ENCODE measurements at regions of chr14 and their contacts with region 1.

Region 1: DNA sequence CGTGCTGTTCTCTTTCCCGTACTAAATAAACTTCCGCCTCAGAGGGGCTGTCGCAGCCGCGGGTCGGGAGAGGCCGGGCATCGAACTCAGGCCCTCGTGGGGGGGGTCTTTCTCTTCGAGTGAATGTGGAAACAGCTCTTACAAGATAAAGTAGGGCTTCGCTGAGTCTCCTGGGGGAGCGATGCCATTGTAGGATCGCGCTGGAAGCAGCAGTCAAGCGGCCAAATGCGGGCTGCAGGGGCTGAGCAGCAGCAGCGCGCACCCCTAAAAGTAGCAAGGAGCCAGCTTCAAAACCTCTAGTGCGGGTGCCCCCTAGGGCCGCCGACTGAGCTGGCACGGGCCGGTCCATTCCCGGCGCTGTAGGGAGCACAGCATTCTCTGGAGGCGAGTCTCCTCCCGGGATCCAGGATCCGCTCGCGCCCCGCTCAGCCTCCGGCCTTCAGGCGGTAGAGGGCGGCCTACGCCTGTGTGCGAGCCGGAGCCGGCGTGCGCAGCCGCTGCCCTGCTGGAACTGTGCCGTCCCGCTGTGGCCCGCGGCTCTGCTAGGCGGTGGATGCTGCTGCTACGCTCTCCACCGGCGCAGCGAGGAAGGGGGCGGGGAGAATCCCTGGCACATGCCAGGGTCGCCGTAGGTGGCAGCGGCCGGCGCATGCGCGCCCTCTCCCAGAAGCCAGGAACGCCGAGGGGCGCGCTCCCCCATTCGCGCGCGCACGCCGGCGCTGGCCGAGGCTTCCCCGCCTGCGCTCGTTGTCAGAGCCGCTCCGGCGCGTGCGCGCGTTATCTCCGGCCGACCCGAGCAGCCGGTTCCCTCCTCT is at the start of gene FUT8:
- DNase-seq: peak; percentile 84 to 96
- ATAC-seq: peak; percentile 85 to 91
- H3K4me3 ChIP-seq: peak within 1 kb of the TSS; percentile 86
- H3K27ac ChIP-seq: peak within 1 kb of the TSS; percentile 88 to 98
- H3K4me1 ChIP-seq: peaks cover 14% of the 10 kb centered on the region; the same call in 2 of the 3 replicates
- CTCF ChIP-seq: peak; percentile 56
- EP300 ChIP-seq: no peak
- POLR2A ChIP-seq: peak; percentile 96
- RAD21 ChIP-seq: peak; percentile 35 to 76; a peak in 4 of 5 replicates
- polyA plus RNA-seq, gene FUT8: 20.3 and 27.5 TPM in 2 replicates

Region 2: GRCh38 chr14:64937821-64938193 is 474.4 kb before region 1 on chr14:
- CTCF ChIA-PET with region 1: no interaction called
- POLR2A ChIA-PET with region 1: no interaction called
- DNase-seq: peak; percentile 29 to 48
- ATAC-seq: peak; percentile 53 to 65
- H3K4me3 ChIP-seq: no peak overlapping the region
- H3K27ac ChIP-seq: peak overlapping the region; percentile 51 to 77
- H3K4me1 ChIP-seq: peaks cover 68% of the 10 kb centered on the region
- CTCF ChIP-seq: peak; percentile 49
- EP300 ChIP-seq: no peak
- POLR2A ChIP-seq: no peak
- RAD21 ChIP-seq: peak; percentile 44 to 57; a peak in 4 of 5 replicates

Region 3: GRCh38 chr14:65164068-65164824 is 248.0 kb before region 1 on chr14:
- CTCF ChIA-PET with region 1: interaction called, 137 read pairs
- POLR2A ChIA-PET with region 1: interaction called, 21 read pairs
- DNase-seq: peak; percentile 56 to 64
- ATAC-seq: peak; percentile 75 to 83
- H3K4me3 ChIP-seq: no peak overlapping the region
- H3K27ac ChIP-seq: no peak overlapping the region
- H3K4me1 ChIP-seq: no peaks in the 10 kb centered on the region
- CTCF ChIP-seq: peak; percentile 94
- EP300 ChIP-seq: no peak
- POLR2A ChIP-seq: no peak
- RAD21 ChIP-seq: peak; percentile 96

Region 4: DNA sequence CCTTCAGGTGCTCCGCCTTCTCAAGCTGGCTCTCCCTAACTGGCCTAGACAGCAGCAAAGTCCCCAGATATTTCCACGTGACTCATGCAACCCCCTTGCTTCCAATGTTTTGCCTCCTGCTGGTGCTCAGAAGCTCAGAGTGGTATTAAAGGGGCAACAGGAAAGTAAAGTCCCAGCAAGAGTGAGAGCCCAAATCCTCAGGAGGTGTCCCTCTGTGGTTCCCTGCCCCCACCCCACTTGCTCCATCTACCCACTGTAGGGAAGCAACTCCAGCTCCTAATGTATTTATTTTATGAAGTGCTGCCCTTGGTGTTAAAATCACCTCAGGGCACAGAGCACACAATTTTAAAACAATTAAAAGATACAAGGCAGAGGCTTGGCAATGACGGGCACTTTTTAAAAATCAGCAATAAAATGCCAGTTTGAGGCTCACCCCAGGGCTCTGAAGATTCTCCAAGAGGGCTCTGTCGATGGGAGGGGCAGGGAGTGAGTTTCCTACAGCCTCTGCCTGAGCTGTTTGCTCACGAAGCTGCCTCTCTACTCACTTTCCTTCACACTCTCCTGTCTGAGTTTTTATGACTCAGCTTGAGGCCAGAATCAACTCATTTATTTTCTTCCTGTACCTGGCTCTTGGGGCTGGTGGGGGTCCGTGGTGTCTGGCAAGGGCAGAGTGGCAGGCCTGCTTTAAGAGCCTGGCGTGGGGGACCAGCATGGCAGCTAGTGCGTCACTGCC is 228.0 kb before region 1 on chr14:
- CTCF ChIA-PET with region 1: interaction called, 12 read pairs
- POLR2A ChIA-PET with region 1: interaction called, 5 read pairs
- DNase-seq: peak in 1 of 2 experiments; percentile 23
- ATAC-seq: peak in 1 of 2 experiments; percentile 53; a peak in 3 of 6 replicates
- H3K4me3 ChIP-seq: no peak overlapping the region
- H3K27ac ChIP-seq: peak overlapping the region; percentile 53 to 70; a peak in 5 of 6 replicates
- H3K4me1 ChIP-seq: peaks cover 26% of the 10 kb centered on the region
- CTCF ChIP-seq: no peak
- EP300 ChIP-seq: no peak
- POLR2A ChIP-seq: no peak
- RAD21 ChIP-seq: no peak

Region 5: DNA sequence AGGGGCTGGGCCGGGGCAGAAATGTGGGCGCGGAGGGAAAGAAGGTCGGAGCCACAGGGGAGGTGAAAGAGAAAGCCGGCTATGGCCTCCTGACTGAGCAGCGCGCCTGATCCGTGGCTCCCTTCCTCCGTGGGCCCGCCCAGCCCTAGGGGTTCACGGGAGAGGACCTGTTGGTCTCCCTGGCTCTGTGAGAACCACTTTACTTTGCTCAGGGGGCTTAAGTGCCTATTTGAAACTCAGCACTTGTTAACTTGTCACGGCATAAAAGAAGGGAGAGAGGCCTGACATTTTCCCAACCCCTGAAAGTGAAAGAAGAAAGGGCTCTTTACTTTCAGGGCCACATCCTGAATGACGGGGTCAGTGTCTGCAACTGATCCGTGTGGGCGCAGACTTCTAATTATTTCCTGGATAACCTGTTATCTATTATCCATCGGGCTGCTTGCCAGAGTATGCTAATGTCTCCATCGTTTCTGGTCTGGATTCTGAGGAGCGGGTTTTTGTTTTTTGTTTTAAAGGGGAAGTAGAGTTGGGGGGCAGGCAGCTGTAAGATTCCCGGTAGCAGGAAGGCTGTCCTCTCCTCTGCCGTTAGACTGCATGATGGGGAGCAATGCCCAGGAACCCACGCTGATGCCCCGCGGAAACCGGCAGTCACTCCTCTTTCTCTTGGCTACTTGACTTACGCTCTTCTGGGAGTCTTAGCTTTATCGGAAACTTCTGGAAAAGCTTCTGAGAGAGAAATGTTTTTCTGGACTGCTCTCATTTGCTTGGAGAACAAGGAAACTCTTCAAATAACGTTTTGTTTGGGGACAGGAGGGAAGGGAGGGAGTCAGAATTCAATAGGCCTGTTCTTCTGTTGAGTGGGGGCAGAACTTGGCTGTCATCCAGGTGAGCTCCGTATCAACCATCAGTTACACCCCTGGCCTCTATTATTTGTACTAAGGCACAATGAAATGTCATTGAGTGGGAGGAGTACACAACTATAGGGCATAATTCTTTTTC is 182.2 kb before region 1 on chr14:
- CTCF ChIA-PET with region 1: interaction called, 42 read pairs
- POLR2A ChIA-PET with region 1: interaction called, 14 read pairs
- DNase-seq: peak in 1 of 2 experiments; percentile 37
- ATAC-seq: peak; percentile 20 to 64; a peak in 5 of 6 replicates
- H3K4me3 ChIP-seq: no peak overlapping the region
- H3K27ac ChIP-seq: peak overlapping the region; percentile 69 to 77
- H3K4me1 ChIP-seq: peaks cover 46% of the 10 kb centered on the region
- CTCF ChIP-seq: no peak
- EP300 ChIP-seq: no peak
- POLR2A ChIP-seq: no peak
- RAD21 ChIP-seq: no peak

Region 6: DNA sequence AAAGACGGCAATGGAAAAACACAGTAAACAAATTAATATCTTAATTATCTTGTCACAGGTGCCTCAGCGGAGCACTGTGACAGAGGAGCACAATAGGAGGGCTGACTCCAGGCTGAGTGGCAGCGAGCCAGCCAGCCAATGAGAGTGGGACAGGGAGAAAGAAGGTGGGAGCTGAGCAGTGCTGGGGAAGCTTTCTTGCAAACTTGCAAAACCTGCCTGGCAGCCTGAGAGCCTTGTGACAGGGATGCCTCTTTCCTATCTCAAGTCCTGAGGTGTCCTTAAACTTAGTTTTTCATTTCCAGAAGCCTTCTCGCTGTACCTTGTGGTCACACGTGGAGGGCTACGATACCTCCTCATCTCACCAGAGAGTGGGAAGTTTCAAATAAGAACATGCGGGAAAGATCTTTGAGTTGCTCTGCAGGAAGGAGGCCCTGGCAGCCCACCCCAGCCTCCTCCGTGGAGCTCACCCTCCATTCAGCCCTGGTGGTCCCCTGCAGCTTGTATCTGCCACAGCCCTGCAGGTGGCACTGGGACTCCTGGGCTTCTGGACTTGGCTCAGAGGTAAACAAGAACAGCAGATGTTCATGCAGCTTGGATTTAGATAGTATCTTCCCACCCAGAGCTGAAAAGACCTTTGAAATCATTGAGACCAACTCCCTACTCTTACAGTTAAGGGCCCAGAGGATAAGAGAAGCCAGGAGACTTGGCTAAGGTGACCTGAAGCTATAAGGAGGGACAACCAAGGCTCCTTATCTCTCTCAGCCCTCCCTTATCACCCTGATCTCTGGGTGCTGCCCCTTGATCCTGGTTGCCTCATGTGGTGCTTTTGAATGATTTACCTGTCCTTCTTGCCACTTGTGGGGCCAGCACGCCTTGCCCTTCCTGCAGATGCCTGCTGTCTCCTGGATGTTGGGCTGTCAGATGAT is 156.4 kb before region 1 on chr14:
- CTCF ChIA-PET with region 1: interaction called, 7 read pairs
- POLR2A ChIA-PET with region 1: interaction called, 12 read pairs
- DNase-seq: peak in 1 of 2 experiments; percentile 32
- ATAC-seq: peak; percentile 43 to 68; a peak in 3 of 6 replicates
- H3K4me3 ChIP-seq: no peak overlapping the region
- H3K27ac ChIP-seq: peak overlapping the region; percentile 83 to 90
- H3K4me1 ChIP-seq: peaks cover 51% of the 10 kb centered on the region
- CTCF ChIP-seq: no peak
- EP300 ChIP-seq: no peak
- POLR2A ChIP-seq: no peak
- RAD21 ChIP-seq: no peak; a peak in 1 of 5 replicates

Region 7: DNA sequence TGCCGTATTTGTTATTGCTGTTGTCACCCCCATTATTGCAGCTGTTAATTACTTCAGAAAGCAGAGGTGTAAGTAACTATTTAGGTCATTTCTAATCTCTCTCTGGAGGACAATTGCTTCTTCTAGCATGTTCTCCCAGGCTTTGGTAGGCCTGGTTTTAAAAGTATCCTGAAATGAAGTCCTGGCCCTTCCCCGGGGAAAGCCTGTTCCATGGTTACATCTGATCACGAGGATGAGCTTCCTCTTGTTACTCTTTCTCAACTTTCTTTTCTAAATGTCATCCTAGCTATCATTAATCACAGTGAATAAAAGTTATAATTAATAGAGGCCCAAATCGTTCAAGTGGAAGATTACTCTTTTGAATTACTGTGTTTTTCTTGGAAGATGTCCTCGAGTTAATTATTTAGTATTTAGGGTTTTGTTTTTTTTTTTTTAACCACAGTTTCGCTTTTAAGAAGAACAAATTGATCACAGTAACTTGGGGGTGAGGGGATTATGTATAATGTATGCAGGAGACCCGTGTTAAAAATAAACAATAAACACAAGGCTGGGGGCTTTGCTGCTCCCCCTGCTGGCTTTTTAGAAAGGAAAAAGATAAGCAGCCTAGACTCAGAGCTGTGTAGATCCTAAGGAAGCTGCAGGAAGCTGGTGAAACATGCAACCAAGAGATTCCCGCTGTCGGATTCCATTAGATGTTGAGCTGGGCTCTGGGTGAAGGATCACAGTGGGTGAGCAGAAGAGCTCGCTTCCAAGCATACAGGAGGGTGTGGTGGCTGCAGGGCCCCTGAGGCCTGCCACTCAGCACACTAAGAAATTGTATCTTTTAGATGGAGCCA is 420.4 kb after region 1 on chr14:
- CTCF ChIA-PET with region 1: interaction called, 108 read pairs
- POLR2A ChIA-PET with region 1: interaction called, 7 read pairs
- DNase-seq: peak in 1 of 2 experiments; percentile 24
- ATAC-seq: peak in 1 of 2 experiments; percentile 75; a peak in 3 of 6 replicates
- H3K4me3 ChIP-seq: no peak overlapping the region
- H3K27ac ChIP-seq: no peak overlapping the region
- H3K4me1 ChIP-seq: 0 out of 3 replicates have a peak, but pooled peaks cover 4% of the 10 kb centered on the region
- CTCF ChIP-seq: peak; percentile 47
- EP300 ChIP-seq: no peak
- POLR2A ChIP-seq: no peak
- RAD21 ChIP-seq: peak; percentile 19 to 20; a peak in 2 of 5 replicates